K562 (cell line): ENCODE measurements at regions of chr2 and their contacts with region 1.

Region 1: GRCh38 chr2:23760736-23761135 is 166.2 kb downstream of the ATAD2B start:
- DNase-seq: no peak
- ATAC-seq: no peak
- H3K4me3 ChIP-seq: no peak overlapping the region
- H3K27ac ChIP-seq: no peak overlapping the region
- H3K4me1 ChIP-seq: peaks cover 0 to 11% of the 10 kb centered on the region in 2 experiments; a peak in 2 of 5 replicates
- H3K27me3 ChIP-seq: no peaks in the 10 kb centered on the region
- CTCF ChIP-seq: peak in 1 of 3 experiments; percentile 41; a peak in 2 of 6 replicates
- EP300 ChIP-seq: no peak
- POLR2A ChIP-seq: no peak
- RAD21 ChIP-seq: peak; percentile 18 to 31; a peak in 2 of 4 replicates

Region 2: DNA sequence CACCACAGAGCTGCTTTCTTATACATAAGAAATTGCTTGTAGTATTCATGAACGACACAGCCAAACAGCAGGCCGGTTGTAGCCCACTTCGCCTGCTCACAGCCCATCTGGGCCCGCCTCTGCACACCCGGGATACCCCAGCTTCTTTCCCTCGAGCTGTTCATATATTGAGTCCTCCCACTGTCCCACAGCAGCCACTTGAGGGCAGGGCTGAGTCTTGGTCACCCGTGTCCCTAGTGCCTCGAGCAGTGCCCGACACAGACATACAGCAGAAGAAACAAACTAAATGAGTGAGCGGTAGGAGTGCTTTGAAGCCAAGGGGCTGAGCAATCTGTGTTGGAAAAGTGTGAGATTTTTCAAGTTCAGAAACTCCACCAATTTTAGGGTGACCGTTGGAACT is 124.3 kb before region 1 on chr2:
- CTCF ChIA-PET with region 1: interaction called, 6 read pairs
- POLR2A ChIA-PET with region 1: no interaction called
- in situ Hi-C with region 1: no loop called
- intact Hi-C with region 1: loop called (anchors 10 kb)
- DNase-seq: peak in 3 of 4 experiments; percentile 21 to 56 (median 49)
- ATAC-seq: peak; percentile 84
- H3K4me3 ChIP-seq: no peak overlapping the region
- H3K27ac ChIP-seq: no peak overlapping the region
- H3K4me1 ChIP-seq: 0 out of 5 replicates have a peak, but pooled peaks cover 0 to 3% of the 10 kb centered on the region in 2 experiments
- H3K27me3 ChIP-seq: peaks cover 3 to 62% of the 10 kb centered on the region in 2 experiments; a peak in 2 of 5 replicates
- CTCF ChIP-seq: peak; percentile 31 to 60 (median 56); a peak in 5 of 6 replicates
- EP300 ChIP-seq: no peak
- POLR2A ChIP-seq: no peak
- RAD21 ChIP-seq: peak in 1 of 2 experiments; percentile 51; a peak in 2 of 4 replicates